Cardiac septum (tissue), 1 donor: ENCODE measurements at regions of chr12 and their contacts with region 1.

Region 1: DNA sequence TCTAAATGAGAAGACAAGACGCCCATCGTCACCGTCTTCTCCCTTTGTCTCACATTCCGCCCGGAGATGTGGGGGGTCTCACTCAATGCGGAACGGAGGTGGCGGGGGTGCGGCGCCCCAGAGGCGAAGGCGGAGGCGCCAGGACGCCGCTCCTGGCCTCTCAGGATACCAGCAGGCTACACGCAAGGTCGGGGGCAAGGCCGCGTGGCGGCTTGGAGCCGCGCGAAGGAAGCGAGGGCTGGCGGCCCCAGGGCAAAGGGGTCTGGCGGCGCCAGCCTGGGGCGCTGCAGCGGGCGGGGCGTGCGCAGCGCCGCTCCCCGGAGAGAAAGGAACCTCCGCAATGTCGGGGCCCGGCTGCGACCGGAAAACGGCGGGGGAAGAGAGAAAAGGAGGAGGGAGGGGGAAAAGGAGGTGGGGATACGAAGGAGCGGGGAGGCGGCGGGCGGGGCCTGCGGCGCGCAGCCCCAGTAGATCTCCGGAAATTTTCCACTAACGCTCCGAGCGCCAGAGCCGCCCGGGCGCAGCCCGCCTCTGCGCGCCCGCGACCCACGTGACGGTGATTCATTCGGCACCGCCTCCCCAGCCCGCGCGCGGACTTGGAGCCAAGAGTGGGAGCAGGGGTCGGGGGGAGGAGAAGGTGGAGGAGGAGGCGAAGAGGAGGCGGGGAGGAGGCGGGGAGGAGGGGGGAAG is 10.5 kb upstream of the SLC38A2 start:
- DNase-seq: peak; percentile 99

Region 2: GRCh38 chr12:46372544-46373110 is 10.5 kb before region 1 on chr12 and contains the start of gene SLC38A2:
- intact Hi-C with region 1: loop called (anchors 1 kb)
- DNase-seq: peak; percentile 99
- total RNA-seq, gene SLC38A2: 140 TPM

Region 3: GRCh38 chr12:46430340-46430948 is 47.3 kb after region 1 on chr12:
- intact Hi-C with region 1: loop called (anchors 5 kb)
- DNase-seq: no peak

Region 4: DNA sequence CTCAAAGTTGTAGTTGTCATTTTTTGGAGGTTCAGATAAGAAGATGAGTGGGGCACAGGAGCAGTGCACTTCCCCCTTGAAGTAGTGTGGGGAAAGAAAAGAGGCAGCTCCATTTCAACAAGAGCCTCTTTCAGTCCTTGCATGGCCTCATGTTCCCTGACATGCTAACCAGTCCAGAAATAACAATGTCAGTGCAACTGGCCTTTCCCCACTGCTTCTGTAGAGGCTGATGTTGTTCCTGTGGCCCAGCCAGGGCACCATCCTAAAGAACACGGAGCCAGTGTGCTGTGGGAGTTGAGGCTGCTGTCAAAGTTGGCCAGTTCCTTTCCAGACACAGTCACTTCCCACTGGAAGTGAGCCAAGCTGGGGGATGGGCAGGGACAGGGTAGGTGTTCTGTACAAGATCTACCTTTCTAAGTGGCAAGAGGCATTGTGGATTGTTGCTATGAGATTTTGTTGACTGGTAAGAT is 67.2 kb after region 1 on chr12:
- intact Hi-C with region 1: loop called (anchors 5 kb)
- DNase-seq: peak; percentile 87

Region 5: GRCh38 chr12:46473634-46474329 is 90.7 kb after region 1 on chr12:
- intact Hi-C with region 1: loop called (anchors 5 kb)
- DNase-seq: peak; percentile 83

Region 6: GRCh38 chr12:46523863-46524770 is 141.0 kb after region 1 on chr12:
- intact Hi-C with region 1: loop called (anchors 5 kb)
- DNase-seq: no peak

Region 7: GRCh38 chr12:46647034-46647433 is 263.9 kb after region 1 on chr12:
- intact Hi-C with region 1: no loop called
- DNase-seq: no peak